Activated CD8-positive, alpha-beta T cell treated with anti-CD3 and anti-CD28 coated beads for 36 hours (primary cell): ENCODE measurements at regions of chr4 and their contacts with region 1.

Region 1: DNA sequence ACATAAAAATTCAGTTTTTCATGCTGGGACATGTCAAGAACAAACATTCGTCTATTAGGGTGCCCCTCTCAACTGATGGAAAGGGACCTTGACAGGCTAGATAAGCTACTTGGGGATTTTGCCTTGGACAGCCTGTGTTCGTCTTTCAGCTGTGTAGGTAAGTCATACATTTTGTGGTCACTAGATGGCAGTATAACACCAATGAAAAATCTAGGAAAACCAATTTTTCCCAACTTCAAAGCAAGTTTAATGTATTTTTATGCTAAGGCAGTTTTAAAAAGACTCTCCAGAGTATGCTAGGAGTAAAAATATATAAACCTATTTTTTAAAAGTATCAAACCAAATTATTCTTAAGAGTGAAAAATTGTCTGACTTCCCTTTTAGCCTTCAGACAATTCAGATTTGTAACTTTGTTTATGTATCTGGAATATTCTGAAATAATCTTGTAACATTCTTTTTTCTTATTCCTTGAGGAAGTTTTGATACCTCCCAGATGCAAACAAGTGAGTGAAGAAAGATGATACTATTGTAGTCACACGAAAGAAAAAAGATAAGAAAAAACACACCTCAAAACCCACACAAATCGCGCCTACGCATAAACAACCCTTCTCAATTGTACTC is 158.3 kb downstream of the CPE start:
- DNase-seq: peak; percentile 8
- ATAC-seq: no peak
- H3K4me3 Mint-ChIP-seq: no peak overlapping the region
- H3K27ac Mint-ChIP-seq: no peak overlapping the region
- H3K4me1 Mint-ChIP-seq: no peaks in the 10 kb centered on the region
- H3K27me3 Mint-ChIP-seq: peaks cover 6% of the 10 kb centered on the region
- CTCF ChIP-seq: peak; percentile 91

Region 2: DNA sequence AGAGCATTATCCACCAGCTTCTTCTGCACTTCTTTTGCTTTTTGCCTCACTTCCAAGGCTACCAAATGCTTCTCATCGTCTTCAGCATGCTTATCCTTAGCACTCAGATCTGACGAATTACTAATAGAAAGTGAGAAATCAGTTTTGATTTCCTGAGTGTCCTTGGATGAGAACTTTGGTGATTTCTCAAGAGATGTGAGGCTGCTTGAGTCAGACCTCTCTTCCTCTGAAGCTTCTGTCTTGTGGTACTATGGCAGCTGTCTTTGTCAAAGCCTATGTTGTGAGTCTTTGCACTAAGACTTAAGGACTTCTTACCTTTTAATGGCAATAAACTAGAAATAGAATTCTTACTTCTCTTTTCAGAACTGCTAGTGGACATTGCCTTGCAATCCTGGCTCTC is 11.6 kb after region 1 on chr4:
- CTCF ChIA-PET with region 1: interaction called, 10 read pairs
- POLR2A ChIA-PET with region 1: no interaction called
- intact Hi-C with region 1: no loop called
- DNase-seq: no peak
- ATAC-seq: no peak
- H3K4me3 Mint-ChIP-seq: no peak overlapping the region
- H3K27ac Mint-ChIP-seq: no peak overlapping the region
- H3K4me1 Mint-ChIP-seq: peaks cover 2% of the 10 kb centered on the region
- H3K27me3 Mint-ChIP-seq: peaks cover 2% of the 10 kb centered on the region
- CTCF ChIP-seq: no peak

Region 3: GRCh38 chr4:166091912-166092510 is 554.9 kb after region 1 on chr4:
- CTCF ChIA-PET with region 1: interaction called, 6 read pairs
- POLR2A ChIA-PET with region 1: no interaction called
- intact Hi-C with region 1: loop called (anchors 1 kb)
- DNase-seq: no peak
- ATAC-seq: no peak
- H3K4me3 Mint-ChIP-seq: no peak overlapping the region
- H3K27ac Mint-ChIP-seq: no peak overlapping the region
- H3K4me1 Mint-ChIP-seq: no peaks in the 10 kb centered on the region
- H3K27me3 Mint-ChIP-seq: no peaks in the 10 kb centered on the region
- CTCF ChIP-seq: peak; percentile 69